Naive thymus-derived CD8-positive, alpha-beta T cell (primary cell): ENCODE measurements at regions of chr6 and their contacts with region 1.

Region 1: GRCh38 chr6:27809939-27810767 is 102.0 kb downstream of the OR2B2 start:
- DNase-seq: peak; percentile 58 to 95 (median 84)
- ATAC-seq: peak; percentile 63 to 65
- H3K4me3 Mint-ChIP-seq: peak overlapping the region; percentile 90 to 97 (median 96)
- H3K27ac Mint-ChIP-seq: peak overlapping the region; percentile 97 to 99 (median 98)
- H3K4me1 Mint-ChIP-seq: peaks cover 32 to 72% (median 47%) of the 10 kb centered on the region in 4 donors
- H3K27me3 Mint-ChIP-seq: no peaks in the 10 kb centered on the region

Region 2: GRCh38 chr6:27765028-27765590 is 45.0 kb before region 1 on chr6:
- POLR2A ChIA-PET with region 1: no interaction called
- DNase-seq: no peak
- ATAC-seq: no peak
- H3K4me3 Mint-ChIP-seq: no peak overlapping the region
- H3K27ac Mint-ChIP-seq: no peak overlapping the region
- H3K4me1 Mint-ChIP-seq: peaks cover 0 to 8% (median 0%) of the 10 kb centered on the region in 4 donors
- H3K27me3 Mint-ChIP-seq: peaks cover 3 to 19% (median 11%) of the 10 kb centered on the region in 5 donors

Region 3: GRCh38 chr6:27795697-27796494 is 14.3 kb before region 1 on chr6:
- POLR2A ChIA-PET with region 1: interaction called, 13 read pairs
- DNase-seq: peak in 8 of 10 donors; percentile 45 to 89 (median 74)
- ATAC-seq: peak; percentile 53 to 66
- H3K4me3 Mint-ChIP-seq: peak overlapping the region in 1 of 10 donors; percentile 14
- H3K27ac Mint-ChIP-seq: peak overlapping the region in 6 of 10 donors; percentile 28 to 72 (median 51)
- H3K4me1 Mint-ChIP-seq: peaks cover 8 to 28% (median 24%) of the 10 kb centered on the region in 4 donors
- H3K27me3 Mint-ChIP-seq: peaks cover 6 to 11% (median 7%) of the 10 kb centered on the region in 5 donors

Region 4: DNA sequence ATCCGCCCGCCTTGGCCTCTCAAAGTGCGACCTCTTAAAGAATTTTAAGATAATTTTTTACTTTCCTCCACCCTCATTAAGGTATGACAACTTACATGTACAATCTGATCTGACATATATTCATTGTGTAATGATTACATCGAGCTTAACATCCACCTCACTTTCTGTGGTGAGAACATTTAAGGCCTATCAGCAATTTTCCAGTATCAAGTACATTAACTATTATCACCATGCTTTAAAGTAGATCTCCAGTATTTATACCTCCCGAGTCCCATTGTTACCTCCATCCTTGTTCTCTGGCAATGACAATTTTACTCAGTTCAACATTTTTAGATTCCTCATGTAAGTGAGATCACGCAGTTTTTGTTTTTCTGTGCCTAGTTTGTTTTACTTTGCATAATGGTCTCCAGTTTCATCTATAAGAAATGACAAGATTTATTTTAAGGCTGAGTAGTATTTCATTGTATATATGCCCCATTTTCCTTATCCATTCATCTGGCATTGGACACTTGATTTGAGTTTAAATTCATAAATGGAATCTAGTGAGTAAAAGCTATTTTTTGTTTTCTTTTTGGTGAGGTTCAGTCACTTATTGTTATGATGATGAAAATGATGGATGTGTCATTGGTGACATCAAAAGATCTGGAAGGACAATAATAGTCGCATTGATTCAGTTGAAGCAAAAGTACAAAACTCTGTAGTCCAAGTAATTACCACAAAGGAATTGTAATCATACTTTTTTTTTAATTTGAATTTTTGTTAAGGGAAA is 15.1 kb after region 1 on chr6:
- POLR2A ChIA-PET with region 1: interaction called, 438 read pairs
- DNase-seq: peak in 1 of 10 donors; percentile 40
- ATAC-seq: no peak
- H3K4me3 Mint-ChIP-seq: peak overlapping the region; percentile 83 to 99 (median 92)
- H3K27ac Mint-ChIP-seq: peak overlapping the region; percentile 96 to 100 (median 97)
- H3K4me1 Mint-ChIP-seq: peaks cover 8 to 43% (median 31%) of the 10 kb centered on the region in 4 donors
- H3K27me3 Mint-ChIP-seq: no peaks in the 10 kb centered on the region

Region 5: GRCh38 chr6:27838058-27838944 is 28.1 kb after region 1 on chr6:
- POLR2A ChIA-PET with region 1: interaction called, 438 read pairs
- DNase-seq: peak; percentile 63 to 95 (median 88)
- ATAC-seq: peak; percentile 78 to 81
- H3K4me3 Mint-ChIP-seq: no peak overlapping the region
- H3K27ac Mint-ChIP-seq: no peak overlapping the region
- H3K4me1 Mint-ChIP-seq: peaks cover 8 to 36% (median 18%) of the 10 kb centered on the region in 4 donors
- H3K27me3 Mint-ChIP-seq: peaks cover 0 to 8% (median 0%) of the 10 kb centered on the region in 5 donors

Region 6: GRCh38 chr6:27864906-27865849 is 55.0 kb after region 1 on chr6:
- POLR2A ChIA-PET with region 1: interaction called, 323 read pairs
- DNase-seq: peak; percentile 43 to 91 (median 80)
- ATAC-seq: peak; percentile 81
- H3K4me3 Mint-ChIP-seq: peak overlapping the region; percentile 87 to 99 (median 98)
- H3K27ac Mint-ChIP-seq: peak overlapping the region; percentile 87 to 99 (median 96)
- H3K4me1 Mint-ChIP-seq: peaks cover 15 to 45% (median 39%) of the 10 kb centered on the region in 4 donors
- H3K27me3 Mint-ChIP-seq: no peaks in the 10 kb centered on the region

Region 7: DNA sequence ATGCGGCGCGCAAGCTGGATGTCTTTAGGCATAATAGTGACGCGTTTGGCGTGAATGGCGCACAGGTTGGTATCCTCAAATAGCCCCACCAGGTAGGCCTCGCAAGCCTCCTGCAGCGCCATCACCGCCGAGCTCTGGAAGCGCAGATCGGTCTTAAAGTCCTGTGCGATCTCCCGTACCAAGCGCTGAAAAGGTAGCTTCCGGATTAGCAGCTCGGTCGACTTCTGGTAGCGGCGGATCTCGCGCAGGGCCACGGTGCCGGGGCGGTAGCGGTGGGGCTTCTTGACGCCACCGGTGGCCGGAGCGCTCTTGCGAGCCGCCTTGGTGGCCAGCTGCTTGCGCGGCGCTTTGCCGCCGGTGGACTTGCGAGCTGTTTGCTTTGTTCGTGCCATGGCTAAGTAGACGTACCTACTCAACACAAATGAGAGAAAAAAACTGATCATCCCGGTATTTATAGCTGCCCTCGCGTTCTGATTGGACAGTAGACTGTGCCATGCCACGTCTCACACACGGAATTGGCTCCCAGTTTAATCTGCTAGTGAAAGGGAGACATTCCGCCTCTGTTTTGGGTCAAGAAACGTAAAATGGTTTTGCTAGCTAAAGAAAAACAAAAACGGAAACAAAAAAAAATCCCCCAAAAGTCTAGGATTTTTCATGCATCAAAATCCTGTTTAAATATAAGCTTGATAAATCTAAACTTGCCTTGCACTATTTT is 61.9 kb after region 1 on chr6:
- POLR2A ChIA-PET with region 1: interaction called, 323 read pairs
- DNase-seq: peak; percentile 57 to 99 (median 91)
- ATAC-seq: peak; percentile 78 to 79
- H3K4me3 Mint-ChIP-seq: peak overlapping the region; percentile 86 to 95 (median 92)
- H3K27ac Mint-ChIP-seq: peak overlapping the region; percentile 89 to 99 (median 96)
- H3K4me1 Mint-ChIP-seq: peaks cover 21 to 46% (median 38%) of the 10 kb centered on the region in 4 donors
- H3K27me3 Mint-ChIP-seq: no peaks in the 10 kb centered on the region